Naive thymus-derived CD4-positive, alpha-beta T cell (primary cell): ENCODE measurements at regions of chr1 and their contacts with region 1.

Region 1: GRCh38 chr1:153352523-153352922 is 3.9 kb upstream of the PGLYRP4 start:
- DNase-seq: peak; percentile 30 to 69 (median 52)
- ATAC-seq: peak; percentile 77
- H3K4me3 ChIP-seq: no peak overlapping the region
- H3K4me3 Mint-ChIP-seq: no peak overlapping the region
- H3K27ac ChIP-seq: no peak overlapping the region
- H3K27ac Mint-ChIP-seq: no peak overlapping the region
- H3K4me1 ChIP-seq: peaks cover 0 to 6% of the 10 kb centered on the region in 2 donors
- H3K4me1 Mint-ChIP-seq: peaks cover 5 to 16% (median 15%) of the 10 kb centered on the region in 7 donors
- H3K27me3 ChIP-seq: no peaks in the 10 kb centered on the region
- H3K27me3 Mint-ChIP-seq: peaks cover 6 to 24% (median 11%) of the 10 kb centered on the region in 5 donors

Region 2: GRCh38 chr1:153122831-153123421 is 229.6 kb before region 1 on chr1:
- CTCF ChIA-PET with region 1: no interaction called
- POLR2A ChIA-PET with region 1: no interaction called
- intact Hi-C with region 1: no loop called
- DNase-seq: no peak
- ATAC-seq: no peak
- H3K4me3 ChIP-seq: no peak overlapping the region
- H3K4me3 Mint-ChIP-seq: no peak overlapping the region
- H3K27ac ChIP-seq: no peak overlapping the region
- H3K27ac Mint-ChIP-seq: no peak overlapping the region
- H3K4me1 ChIP-seq: no peaks in the 10 kb centered on the region
- H3K4me1 Mint-ChIP-seq: no peaks in the 10 kb centered on the region
- H3K27me3 ChIP-seq: no peaks in the 10 kb centered on the region
- H3K27me3 Mint-ChIP-seq: peaks cover 2 to 31% (median 23%) of the 10 kb centered on the region in 5 donors

Region 3: DNA sequence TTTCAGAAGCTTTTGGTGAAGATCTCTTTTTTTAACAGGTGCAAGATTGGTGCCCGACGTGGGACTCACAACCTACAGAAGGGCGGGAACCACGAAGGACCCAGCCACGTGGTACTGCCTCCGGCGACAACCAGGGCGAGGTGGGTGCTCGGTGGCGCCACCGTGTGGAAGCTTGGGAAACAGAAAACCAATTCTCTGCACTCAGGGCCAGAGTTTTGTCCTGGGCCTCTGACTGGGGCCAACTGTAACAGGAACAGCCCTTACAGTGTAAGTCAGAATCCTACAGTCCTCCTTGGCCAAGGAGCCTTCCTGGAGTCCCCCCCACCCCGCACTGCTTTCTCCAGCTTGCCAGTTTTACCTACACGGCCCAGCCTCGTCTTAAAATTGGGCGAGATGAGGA is 52.2 kb after region 1 on chr1:
- CTCF ChIA-PET with region 1: interaction called, 3 read pairs
- POLR2A ChIA-PET with region 1: no interaction called
- intact Hi-C with region 1: loop called (anchors 1 to 2 kb)
- DNase-seq: peak; percentile 12 to 61 (median 40)
- ATAC-seq: peak; percentile 88
- H3K4me3 ChIP-seq: no peak overlapping the region
- H3K4me3 Mint-ChIP-seq: no peak overlapping the region
- H3K27ac ChIP-seq: no peak overlapping the region
- H3K27ac Mint-ChIP-seq: no peak overlapping the region
- H3K4me1 ChIP-seq: no peaks in the 10 kb centered on the region
- H3K4me1 Mint-ChIP-seq: peaks cover 0 to 25% (median 13%) of the 10 kb centered on the region in 7 donors
- H3K27me3 ChIP-seq: no peaks in the 10 kb centered on the region
- H3K27me3 Mint-ChIP-seq: peaks cover 14 to 30% (median 20%) of the 10 kb centered on the region in 5 donors

Region 4: DNA sequence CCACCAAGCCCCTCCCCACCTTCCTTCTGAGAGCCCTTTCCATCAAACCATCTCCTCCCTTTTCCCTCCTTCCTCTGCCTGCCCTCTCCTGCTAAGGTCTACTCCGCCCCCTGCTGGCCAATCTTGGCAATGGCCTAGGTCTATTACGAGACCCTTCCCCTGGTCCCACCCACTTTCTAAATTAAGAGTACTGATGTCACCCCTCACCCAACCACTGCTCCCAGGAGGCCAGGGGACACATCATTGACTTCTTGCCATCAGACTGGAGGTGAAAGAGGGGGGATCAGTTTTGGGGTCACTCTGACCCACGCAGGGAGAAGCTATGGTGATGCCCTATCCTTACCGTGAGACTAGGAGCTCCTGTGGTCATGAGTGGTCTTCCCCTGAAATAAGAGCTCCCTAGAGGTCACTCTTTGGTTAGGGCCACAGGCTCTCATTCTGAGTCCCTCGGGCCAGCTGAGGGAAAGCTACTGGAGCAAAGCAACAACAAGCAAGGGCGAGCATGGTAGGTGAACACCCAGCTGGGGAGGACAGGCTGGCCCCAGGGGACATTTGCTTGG is 142.5 kb after region 1 on chr1:
- CTCF ChIA-PET with region 1: interaction called, 51 read pairs
- POLR2A ChIA-PET with region 1: no interaction called
- intact Hi-C with region 1: loop called in 1 of 2 experiments (anchors 1 kb)
- DNase-seq: peak; percentile 40 to 78 (median 58)
- ATAC-seq: peak; percentile 84
- H3K4me3 ChIP-seq: no peak overlapping the region
- H3K4me3 Mint-ChIP-seq: no peak overlapping the region
- H3K27ac ChIP-seq: no peak overlapping the region
- H3K27ac Mint-ChIP-seq: no peak overlapping the region
- H3K4me1 ChIP-seq: no peaks in the 10 kb centered on the region
- H3K4me1 Mint-ChIP-seq: peaks cover 0 to 8% (median 0%) of the 10 kb centered on the region in 7 donors
- H3K27me3 ChIP-seq: peaks cover 0 to 3% of the 10 kb centered on the region in 2 donors
- H3K27me3 Mint-ChIP-seq: peaks cover 9 to 45% (median 21%) of the 10 kb centered on the region in 5 donors

Region 5: GRCh38 chr1:153633716-153634665 is 281.5 kb after region 1 on chr1 and contains the start of gene CHTOP:
- CTCF ChIA-PET with region 1: no interaction called
- POLR2A ChIA-PET with region 1: no interaction called
- intact Hi-C with region 1: loop called in 1 of 2 experiments (anchors 10 kb)
- DNase-seq: peak; percentile 96 to 99 (median 96)
- ATAC-seq: peak; percentile 95
- H3K4me3 ChIP-seq: peak within 1 kb of the TSS; percentile 99
- H3K4me3 Mint-ChIP-seq: peak within 1 kb of the TSS; percentile 97 to 100 (median 99)
- H3K27ac ChIP-seq: peak within 1 kb of the TSS; percentile 98
- H3K27ac Mint-ChIP-seq: peak within 1 kb of the TSS; percentile 98 to 100 (median 100)
- H3K4me1 ChIP-seq: peaks cover 11 to 25% of the 10 kb centered on the region in 2 donors
- H3K4me1 Mint-ChIP-seq: peaks cover 30 to 52% (median 41%) of the 10 kb centered on the region in 7 donors
- H3K27me3 ChIP-seq: no peaks in the 10 kb centered on the region
- H3K27me3 Mint-ChIP-seq: peaks cover 0 to 3% (median 0%) of the 10 kb centered on the region in 5 donors
- total RNA-seq, gene CHTOP: 85.2 to 143 (median 116) TPM

Region 6: DNA sequence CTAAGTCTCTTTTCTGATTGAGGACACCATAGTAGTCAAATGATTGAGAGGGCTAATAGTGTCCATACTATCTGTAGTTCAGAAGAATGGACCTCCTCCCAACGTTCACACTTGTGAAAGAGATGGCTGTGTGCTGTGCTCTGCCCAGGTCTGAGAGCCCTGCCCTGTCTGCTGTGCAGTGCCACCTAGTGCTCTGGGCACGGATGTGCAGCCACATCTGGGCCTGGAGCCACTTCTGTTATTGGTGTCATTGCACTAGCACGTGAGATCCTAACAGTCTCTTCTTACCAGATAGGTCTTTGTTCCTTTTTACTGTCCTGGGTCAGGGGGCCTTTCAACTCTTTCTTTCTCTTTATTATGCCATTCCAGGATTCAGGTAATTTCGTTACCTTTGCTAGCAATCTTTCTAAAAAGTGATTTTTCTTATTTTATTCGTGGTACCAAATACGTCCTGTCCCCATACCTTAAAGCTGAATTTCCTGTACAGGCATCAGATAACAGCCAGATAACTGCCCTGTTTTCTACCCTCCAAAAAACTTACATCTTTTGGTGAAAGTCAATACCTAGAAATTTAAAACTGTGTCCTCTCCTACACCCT is 397.0 kb after region 1 on chr1:
- CTCF ChIA-PET with region 1: no interaction called
- POLR2A ChIA-PET with region 1: no interaction called
- intact Hi-C with region 1: loop called in 1 of 2 experiments (anchors 2 kb)
- DNase-seq: peak; percentile 62 to 79 (median 76)
- ATAC-seq: peak; percentile 100
- H3K4me3 ChIP-seq: no peak overlapping the region
- H3K4me3 Mint-ChIP-seq: no peak overlapping the region
- H3K27ac ChIP-seq: no peak overlapping the region
- H3K27ac Mint-ChIP-seq: peak overlapping the region in 4 of 9 donors; percentile 0 to 71 (median 8)
- H3K4me1 ChIP-seq: no peaks in the 10 kb centered on the region
- H3K4me1 Mint-ChIP-seq: peaks cover 0 to 9% (median 4%) of the 10 kb centered on the region in 7 donors
- H3K27me3 ChIP-seq: no peaks in the 10 kb centered on the region
- H3K27me3 Mint-ChIP-seq: no peaks in the 10 kb centered on the region